Activated T-helper 1 cell treated with anti-CD3 and anti-CD28 coated beads, Interleukin-12 subunit alpha, Interleukin-12 subunit beta, Interleukin-2, Interleukin-4 antibody, amounts not matched to agents 30 ng/mL and 10 ng/mL and 1 ng/mL, durations not matched to agents 14 hours and 24 hours and 36 hours (primary cell): ENCODE measurements at regions of chr7 and their contacts with region 1.

Region 1: GRCh38 chr7:102942181-102942866 is 29.5 kb downstream of the LRRC17 start:
- DNase-seq: no peak
- H3K4me3 Mint-ChIP-seq: no peak overlapping the region
- H3K27ac Mint-ChIP-seq: no peak overlapping the region
- H3K4me1 Mint-ChIP-seq: peaks cover 7% of the 10 kb centered on the region
- H3K27me3 Mint-ChIP-seq: peaks cover 3% of the 10 kb centered on the region

Region 2: GRCh38 chr7:102860351-102860811 is 81.9 kb before region 1 on chr7:
- intact Hi-C with region 1: no loop called
- DNase-seq: no peak
- H3K4me3 Mint-ChIP-seq: no peak overlapping the region
- H3K27ac Mint-ChIP-seq: no peak overlapping the region
- H3K4me1 Mint-ChIP-seq: no peaks in the 10 kb centered on the region
- H3K27me3 Mint-ChIP-seq: peaks cover 12% of the 10 kb centered on the region

Region 3: GRCh38 chr7:102891693-102892261 is 50.5 kb before region 1 on chr7:
- intact Hi-C with region 1: no loop called
- DNase-seq: no peak
- H3K4me3 Mint-ChIP-seq: no peak overlapping the region
- H3K27ac Mint-ChIP-seq: no peak overlapping the region
- H3K4me1 Mint-ChIP-seq: no peaks in the 10 kb centered on the region
- H3K27me3 Mint-ChIP-seq: peaks cover 4% of the 10 kb centered on the region

Region 4: DNA sequence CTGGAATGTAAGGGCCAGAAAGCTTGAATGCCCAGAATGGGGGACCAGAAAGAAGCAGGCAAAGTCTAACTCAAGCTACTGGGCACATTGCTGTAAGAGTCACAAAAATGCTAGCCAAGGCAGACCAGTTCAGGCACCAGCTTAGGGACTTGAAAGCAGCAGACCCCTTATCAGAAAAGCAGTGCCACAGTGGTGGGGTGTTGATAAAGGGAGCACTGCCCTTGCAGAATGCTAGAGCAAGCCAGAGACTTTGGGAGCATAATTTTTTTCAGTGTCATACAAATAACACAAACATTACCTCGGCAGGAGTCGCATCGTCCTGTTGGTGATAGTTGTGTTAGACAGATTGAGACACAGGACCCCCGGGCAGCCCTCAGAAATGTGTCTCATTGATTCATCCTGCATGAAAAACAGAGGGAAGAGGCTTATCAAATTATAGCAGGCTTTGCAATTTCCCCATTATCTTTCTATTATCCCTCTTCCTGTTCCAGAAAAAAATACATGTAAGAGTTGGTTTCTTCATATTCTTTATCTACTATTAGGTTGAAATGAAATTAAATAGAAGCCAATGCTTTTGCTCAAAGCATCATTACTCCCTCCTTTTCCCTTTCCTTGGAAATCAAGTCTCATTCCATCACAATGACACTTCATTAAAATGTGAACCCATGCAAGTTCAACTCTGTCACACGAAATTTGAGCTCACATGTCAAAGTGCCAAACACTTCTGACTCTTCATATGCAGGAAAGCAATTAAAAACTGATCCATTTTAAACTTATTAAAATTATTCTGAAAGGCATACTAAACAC is 16.1 kb before region 1 on chr7:
- intact Hi-C with region 1: no loop called
- DNase-seq: no peak
- H3K4me3 Mint-ChIP-seq: no peak overlapping the region
- H3K27ac Mint-ChIP-seq: no peak overlapping the region
- H3K4me1 Mint-ChIP-seq: no peaks in the 10 kb centered on the region
- H3K27me3 Mint-ChIP-seq: peaks cover 2% of the 10 kb centered on the region

Region 5: GRCh38 chr7:102988631-102989539 is 46.6 kb after region 1 on chr7:
- intact Hi-C with region 1: loop called (anchors 1 kb)
- DNase-seq: no peak
- H3K4me3 Mint-ChIP-seq: no peak overlapping the region
- H3K27ac Mint-ChIP-seq: no peak overlapping the region
- H3K4me1 Mint-ChIP-seq: peaks cover 7% of the 10 kb centered on the region
- H3K27me3 Mint-ChIP-seq: no peaks in the 10 kb centered on the region